ENCODE measurements at regions of chr6 and their contacts with region 1.

Region 1: DNA sequence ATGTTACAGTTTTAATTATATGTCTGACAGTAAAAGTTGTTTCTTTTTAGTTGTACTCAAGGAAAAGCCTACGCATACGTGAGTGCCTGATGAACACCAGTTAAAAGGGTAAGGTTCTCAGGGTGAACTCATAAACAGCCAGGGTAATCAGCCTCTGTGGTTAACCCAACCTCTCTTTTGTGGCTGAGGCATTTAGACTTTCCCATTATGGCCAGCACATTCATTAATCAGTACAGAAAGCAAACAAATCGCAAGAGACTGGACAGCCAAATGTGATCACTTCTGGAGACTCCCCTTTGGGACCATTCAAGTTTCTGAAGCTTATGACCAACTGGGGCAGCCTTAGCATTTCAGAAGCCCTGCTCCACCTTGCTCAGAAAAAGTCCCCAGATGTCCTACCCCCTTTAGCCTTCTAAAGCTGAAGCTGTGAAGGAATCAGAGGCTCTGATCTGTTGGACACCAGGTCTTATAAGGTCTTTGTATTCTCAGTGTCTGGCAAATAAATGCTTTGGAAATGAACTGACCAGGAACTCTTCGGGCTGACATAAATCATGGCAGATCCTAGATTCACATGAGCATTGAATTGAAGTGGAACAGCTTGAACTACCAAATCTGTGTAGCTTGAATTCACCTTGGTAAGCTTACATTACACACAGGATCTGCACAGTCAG is 18.8 kb downstream of the IL20RA start:
- DNase-seq: peak; percentile 30
- H3K4me3 Mint-ChIP-seq: no peak overlapping the region
- H3K27ac Mint-ChIP-seq: no peak overlapping the region
- H3K4me1 Mint-ChIP-seq: peaks cover 5% of the 10 kb centered on the region
- H3K27me3 Mint-ChIP-seq: peaks cover 33% of the 10 kb centered on the region

Region 2: GRCh38 chr6:137089305-137089704 is 63.4 kb after region 1 on chr6:
- CTCF ChIA-PET with region 1: no interaction called
- POLR2A ChIA-PET with region 1: no interaction called
- intact Hi-C with region 1: loop called (anchors 5 kb)
- DNase-seq: no peak
- H3K4me3 Mint-ChIP-seq: no peak overlapping the region
- H3K27ac Mint-ChIP-seq: no peak overlapping the region
- H3K4me1 Mint-ChIP-seq: peaks cover 19% of the 10 kb centered on the region
- H3K27me3 Mint-ChIP-seq: peaks cover 7% of the 10 kb centered on the region